ENCODE measurements at regions of chr17 and their contacts with region 1.

Region 1: GRCh38 chr17:5486204-5487124 is at the start of gene MIS12:
- DNase-seq: peak; percentile 99
- H3K4me3 Mint-ChIP-seq: peak within 1 kb of the TSS; percentile 97
- H3K27ac Mint-ChIP-seq: peak within 1 kb of the TSS; percentile 97
- H3K4me1 Mint-ChIP-seq: peaks cover 60% of the 10 kb centered on the region
- H3K27me3 Mint-ChIP-seq: no peaks in the 10 kb centered on the region
- total RNA-seq, gene MIS12: 37.2 to 37.6 TPM

Region 2: DNA sequence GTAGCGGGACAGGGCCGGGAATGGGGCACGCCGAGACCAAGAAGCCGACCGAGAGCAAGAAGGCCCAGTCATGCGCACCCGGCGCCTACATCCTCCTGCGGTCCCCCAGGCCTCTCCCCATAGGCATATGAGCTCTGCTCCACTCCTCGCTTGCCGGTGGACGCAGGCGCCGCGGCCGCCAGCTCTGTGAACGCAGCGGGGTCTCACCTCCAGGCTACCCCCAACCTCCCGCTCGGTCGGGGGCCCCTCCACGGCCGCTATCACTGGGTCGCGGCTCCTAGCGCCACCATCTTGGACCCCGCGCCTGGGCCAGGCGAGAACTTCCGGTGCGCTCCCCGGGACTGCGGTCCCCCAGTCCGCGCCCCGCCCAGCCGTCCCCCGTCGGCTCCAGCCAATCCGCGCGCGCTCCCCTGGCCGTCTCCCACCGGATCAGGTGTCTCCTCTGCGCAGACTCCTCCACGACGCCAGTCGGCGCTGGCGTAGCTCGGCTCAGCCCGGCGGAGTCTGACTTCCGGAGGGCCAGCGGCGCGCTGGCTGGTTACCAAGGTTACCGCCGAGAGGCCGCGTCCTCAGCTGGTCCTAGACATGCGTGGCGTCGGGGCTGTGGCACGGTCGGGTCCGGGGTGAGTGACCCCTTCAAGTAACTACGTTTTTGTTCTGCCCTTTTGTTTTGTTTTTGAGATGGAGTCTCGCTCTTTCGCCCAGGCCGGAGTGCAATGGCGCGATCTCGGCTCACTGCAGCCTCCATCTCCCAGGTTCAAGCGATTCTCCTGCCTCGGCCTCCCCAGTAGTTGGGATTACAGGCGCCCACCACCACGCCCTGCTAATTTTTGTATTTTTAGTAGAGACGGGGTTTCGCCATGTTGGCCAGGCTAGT is 294.7 kb before region 1 on chr17 and contains the start of gene ZNF594:
- CTCF ChIA-PET with region 1: no interaction called
- intact Hi-C with region 1: loop called (anchors 1 kb)
- DNase-seq: peak; percentile 98
- H3K4me3 Mint-ChIP-seq: peak within 1 kb of the TSS; percentile 90
- H3K27ac Mint-ChIP-seq: peak within 1 kb of the TSS; percentile 82
- H3K4me1 Mint-ChIP-seq: peaks cover 31% of the 10 kb centered on the region
- H3K27me3 Mint-ChIP-seq: no peaks in the 10 kb centered on the region
- total RNA-seq, gene ZNF594: 3.9 to 4.1 TPM

Region 3: DNA sequence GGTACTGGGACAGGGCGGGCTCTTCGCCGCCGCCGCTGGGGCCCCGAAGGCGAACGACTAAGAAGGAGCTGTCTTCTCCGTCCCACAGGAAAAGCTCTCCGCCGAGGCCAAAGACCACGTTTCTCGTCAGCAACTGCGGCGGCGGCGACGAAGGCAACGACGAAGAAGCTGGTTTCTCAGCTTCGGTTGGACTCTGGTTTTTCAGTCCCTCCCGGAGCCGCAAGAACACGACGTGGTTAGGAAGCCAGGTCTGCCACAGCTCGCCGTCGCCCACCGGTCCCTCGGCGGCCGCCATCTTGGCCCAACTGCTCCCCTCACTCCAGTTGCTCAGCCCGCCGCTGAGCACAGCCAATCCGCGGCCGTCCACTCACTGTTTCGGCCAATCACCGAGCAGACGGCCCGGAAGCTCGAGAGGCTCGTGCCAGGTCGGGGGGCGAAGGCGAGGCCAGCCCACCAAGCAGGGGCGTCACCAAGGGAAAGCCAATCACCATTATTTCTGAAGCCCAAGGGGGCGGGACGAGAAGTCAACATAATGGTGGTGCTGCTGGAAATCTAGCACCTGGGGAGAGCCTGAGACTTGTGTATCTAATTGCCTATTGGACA is 67.0 kb before region 1 on chr17 and contains the start of gene NUP88:
- CTCF ChIA-PET with region 1: no interaction called
- intact Hi-C with region 1: loop called (anchors 1 kb)
- DNase-seq: peak; percentile 97
- H3K4me3 Mint-ChIP-seq: peak within 1 kb of the TSS; percentile 100
- H3K27ac Mint-ChIP-seq: peak within 1 kb of the TSS; percentile 100
- H3K4me1 Mint-ChIP-seq: peaks cover 50% of the 10 kb centered on the region
- H3K27me3 Mint-ChIP-seq: no peaks in the 10 kb centered on the region
- total RNA-seq, gene NUP88: 115 to 131 TPM

Region 4: GRCh38 chr17:5468075-5468473 is 18.4 kb before region 1 on chr17:
- CTCF ChIA-PET with region 1: interaction called, 3 read pairs
- intact Hi-C with region 1: loop called (anchors 1 kb)
- DNase-seq: peak; percentile 22
- H3K4me3 Mint-ChIP-seq: peak overlapping the region; percentile 80
- H3K27ac Mint-ChIP-seq: peak overlapping the region; percentile 0
- H3K4me1 Mint-ChIP-seq: peaks cover 37% of the 10 kb centered on the region
- H3K27me3 Mint-ChIP-seq: no peaks in the 10 kb centered on the region

Region 5: GRCh38 chr17:5571281-5571680 is 84.8 kb after region 1 on chr17:
- CTCF ChIA-PET with region 1: no interaction called
- intact Hi-C with region 1: no loop called
- DNase-seq: no peak
- H3K4me3 Mint-ChIP-seq: no peak overlapping the region
- H3K27ac Mint-ChIP-seq: no peak overlapping the region
- H3K4me1 Mint-ChIP-seq: peaks cover 54% of the 10 kb centered on the region
- H3K27me3 Mint-ChIP-seq: no peaks in the 10 kb centered on the region

Region 6: GRCh38 chr17:6640536-6641373 is 1154.3 kb after region 1 on chr17 and contains the starts of genes KIAA0753 and TXNDC17:
- CTCF ChIA-PET with region 1: no interaction called
- intact Hi-C with region 1: loop called (anchors 1 kb)
- DNase-seq: peak; percentile 93
- H3K4me3 Mint-ChIP-seq: peak within 1 kb of the TSS; percentile 81
- H3K27ac Mint-ChIP-seq: peak within 1 kb of the TSS; percentile 97
- H3K4me1 Mint-ChIP-seq: peaks cover 51% of the 10 kb centered on the region
- H3K27me3 Mint-ChIP-seq: no peaks in the 10 kb centered on the region
- total RNA-seq, gene KIAA0753: 7.7 to 8.1 TPM
- total RNA-seq, gene TXNDC17: 71.4 to 85.8 TPM